Mammary epithelial cell (primary cell): ENCODE measurements at regions of chr2 and their contacts with region 1.

Region 1: GRCh38 chr2:111705711-111706336 is 178.2 kb downstream of the ANAPC1 start:
- DNase-seq: peak; percentile 89
- H3K4me3 ChIP-seq: no peak overlapping the region
- H3K27ac ChIP-seq: no peak overlapping the region
- H3K4me1 ChIP-seq: peaks cover 46% of the 10 kb centered on the region
- H3K27me3 ChIP-seq: peaks cover 2% of the 10 kb centered on the region
- CTCF ChIP-seq: no peak

Region 2: DNA sequence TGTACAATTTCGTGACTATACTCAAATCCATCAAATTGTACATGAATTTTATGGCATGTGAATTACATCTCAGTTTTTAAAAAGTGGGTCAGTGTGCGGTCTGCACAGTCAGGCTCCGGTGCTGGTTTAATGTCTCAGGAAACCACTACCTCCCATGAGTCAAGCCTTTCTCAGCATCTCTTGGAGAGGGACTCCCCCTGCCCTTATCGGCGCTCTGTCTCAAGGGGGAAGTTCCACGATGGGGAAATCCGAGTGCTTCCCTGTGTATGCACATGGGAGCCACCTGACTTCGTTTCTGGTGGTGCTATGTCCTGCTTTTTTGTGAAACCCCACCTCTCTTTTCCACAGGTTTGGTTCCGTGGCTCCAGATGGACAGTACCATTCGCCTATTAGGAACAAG is 900.9 kb before region 1 on chr2:
- CTCF ChIA-PET with region 1: no interaction called
- dilution Hi-C with region 1: no loop called
- in situ Hi-C with region 1: loop called in 1 of 2 experiments (anchors 25 kb)
- intact Hi-C with region 1: no loop called
- DNase-seq: no peak
- H3K4me3 ChIP-seq: no peak overlapping the region
- H3K27ac ChIP-seq: no peak overlapping the region
- H3K4me1 ChIP-seq: no peaks in the 10 kb centered on the region
- H3K27me3 ChIP-seq: peaks cover 2% of the 10 kb centered on the region
- CTCF ChIP-seq: no peak

Region 3: DNA sequence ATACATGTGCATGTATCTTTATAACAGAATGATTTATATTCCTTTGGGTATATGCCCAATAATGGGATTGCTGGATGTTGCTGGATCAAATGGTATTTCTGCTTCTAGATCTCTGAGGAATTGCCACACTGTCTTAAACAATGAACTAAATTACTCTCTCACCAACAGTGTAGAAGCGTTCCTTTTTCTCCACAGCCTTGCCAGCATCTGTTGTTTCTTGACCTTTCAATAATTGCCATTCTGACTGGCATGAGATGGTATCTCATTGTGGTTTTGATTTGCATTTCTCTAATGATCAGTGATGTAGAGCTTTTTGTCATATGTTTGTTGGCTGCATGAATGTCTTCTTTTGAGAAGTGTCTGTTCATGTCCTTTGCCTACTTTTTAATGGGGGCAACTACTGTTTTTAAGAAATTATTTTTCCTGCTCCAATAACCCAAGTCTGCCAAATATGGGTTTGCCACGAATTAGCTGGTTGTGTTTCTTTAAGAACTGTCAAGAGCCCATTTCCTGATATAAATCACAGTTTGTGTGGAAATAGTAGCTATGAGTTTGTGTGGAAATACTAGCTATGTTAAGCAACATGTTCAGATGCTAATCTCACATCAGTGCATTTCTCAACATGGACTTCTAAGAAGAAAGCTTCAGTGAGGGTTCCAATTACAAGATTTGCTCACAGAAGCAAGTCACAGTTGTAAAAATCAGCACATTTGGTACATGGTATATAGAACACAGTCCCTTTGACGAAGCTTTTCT is 81.2 kb before region 1 on chr2:
- CTCF ChIA-PET with region 1: interaction called, 11 read pairs
- dilution Hi-C with region 1: no loop called
- in situ Hi-C with region 1: no loop called
- intact Hi-C with region 1: loop called (anchors 1 kb)
- DNase-seq: peak; percentile 80
- H3K4me3 ChIP-seq: no peak overlapping the region
- H3K27ac ChIP-seq: no peak overlapping the region
- H3K4me1 ChIP-seq: peaks cover 19% of the 10 kb centered on the region
- H3K27me3 ChIP-seq: no peaks in the 10 kb centered on the region
- CTCF ChIP-seq: no peak

Region 4: DNA sequence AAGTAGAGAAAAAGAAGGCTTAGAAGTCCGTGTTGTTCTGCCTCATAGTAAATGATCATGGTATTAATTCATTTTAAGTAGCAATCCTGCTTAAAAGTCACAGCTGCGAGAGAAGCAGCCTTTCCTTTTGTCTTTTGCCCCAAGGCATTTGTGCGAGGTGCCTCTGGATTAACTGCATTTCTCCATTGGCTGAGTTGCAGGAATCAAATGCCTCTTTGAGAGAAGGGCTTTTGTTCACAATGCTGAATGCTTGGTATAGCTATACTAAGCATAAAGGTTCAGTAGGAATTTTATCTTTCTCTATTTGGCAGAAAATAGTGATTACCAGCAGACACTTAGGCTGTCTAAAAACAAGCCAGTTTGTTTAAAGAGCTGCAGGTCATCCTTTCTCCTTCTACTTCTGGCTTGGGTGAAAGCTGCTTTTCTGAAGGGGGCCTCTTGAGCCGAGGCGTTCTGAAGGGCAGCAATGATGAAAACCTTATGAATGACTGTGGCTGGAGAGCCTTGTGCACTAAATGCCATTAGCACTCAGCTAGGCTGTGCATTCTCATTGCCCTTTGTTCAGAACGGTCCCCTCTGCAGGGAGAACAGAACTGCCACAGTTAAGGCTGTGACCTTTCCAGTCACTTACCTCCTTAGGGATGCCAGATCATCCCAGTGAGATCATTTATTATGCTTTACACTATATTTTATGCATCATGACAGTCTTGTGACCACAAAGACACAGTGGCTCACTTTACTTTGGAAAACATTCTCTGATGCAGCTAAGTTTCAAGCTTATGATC is 280.5 kb after region 1 on chr2:
- CTCF ChIA-PET with region 1: no interaction called
- dilution Hi-C with region 1: no loop called
- in situ Hi-C with region 1: no loop called
- intact Hi-C with region 1: no loop called
- DNase-seq: no peak
- H3K4me3 ChIP-seq: no peak overlapping the region
- H3K27ac ChIP-seq: no peak overlapping the region
- H3K4me1 ChIP-seq: no peaks in the 10 kb centered on the region
- H3K27me3 ChIP-seq: peaks cover 15% of the 10 kb centered on the region
- CTCF ChIP-seq: no peak